GM12878 (cell line): ENCODE measurements at regions of chr14 and their contacts with region 1.

Region 1: DNA sequence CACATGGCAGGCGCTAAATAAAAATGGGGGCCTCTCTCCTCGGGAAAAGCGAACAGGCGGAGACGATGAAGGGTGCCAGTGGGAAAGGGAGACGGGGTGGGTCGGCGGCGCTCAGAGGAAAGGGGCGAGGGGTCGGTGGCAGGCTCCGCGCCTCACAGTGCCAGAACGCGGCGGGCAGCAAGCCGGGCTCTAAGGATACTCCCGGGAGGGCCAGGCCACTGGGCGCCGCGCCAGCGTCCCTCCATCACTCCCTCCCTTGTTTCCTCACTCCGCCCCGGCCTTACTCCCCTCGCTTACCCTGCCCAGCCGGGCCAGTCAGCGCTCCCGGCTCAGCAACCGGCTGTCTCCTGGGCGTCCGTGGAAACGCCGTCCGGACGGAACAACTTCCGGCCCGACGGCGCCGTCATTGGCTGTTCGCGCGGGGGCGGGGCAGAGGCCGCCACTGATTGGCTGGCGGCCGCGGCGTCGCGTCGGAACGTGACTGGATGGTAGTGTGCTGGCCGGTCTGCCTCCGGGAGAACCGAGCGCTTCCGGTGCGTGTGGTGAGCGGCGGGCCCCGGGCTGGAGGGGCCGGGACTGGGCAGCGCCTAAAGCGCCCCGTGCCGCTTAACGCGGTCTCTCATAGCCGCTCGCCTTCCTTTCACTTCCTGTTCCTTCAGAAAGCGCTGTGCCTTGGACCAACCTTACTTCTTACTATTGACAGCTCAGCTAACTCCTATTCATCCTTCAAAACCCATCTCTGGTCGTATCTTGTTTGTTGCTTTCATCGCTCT is 53.0 kb downstream of the SLC25A47 start:
- DNase-seq: peak; percentile 74
- ATAC-seq: peak; percentile 85
- H3K4me3 ChIP-seq: peak within 1 kb of the TSS; percentile 86
- H3K27ac ChIP-seq: peak within 1 kb of the TSS; percentile 98
- H3K4me1 ChIP-seq: peaks cover 29% of the 10 kb centered on the region
- H3K27me3 ChIP-seq: no peaks in the 10 kb centered on the region
- CTCF ChIP-seq: no peak
- EP300 ChIP-seq: no peak
- POLR2A ChIP-seq: peak; percentile 91
- RAD21 ChIP-seq: no peak

Region 2: GRCh38 chr14:100239840-100240724 is 136.1 kb before region 1 on chr14:
- CTCF ChIA-PET with region 1: interaction called, 11 read pairs
- POLR2A ChIA-PET with region 1: interaction called, 3 read pairs
- RAD21 ChIA-PET with region 1: interaction called, 4 read pairs
- SMC1A ChIA-PET with region 1: interaction called, 5 read pairs
- in situ Hi-C with region 1: no loop called
- intact Hi-C with region 1: loop called (anchors 2 kb)
- DNase-seq: no peak
- ATAC-seq: peak; percentile 52
- H3K4me3 ChIP-seq: peak overlapping the region; percentile 95
- H3K27ac ChIP-seq: peak overlapping the region; percentile 74
- H3K4me1 ChIP-seq: no peaks in the 10 kb centered on the region
- H3K27me3 ChIP-seq: no peaks in the 10 kb centered on the region
- CTCF ChIP-seq: peak; percentile 58 to 71 (median 71); a peak in 5 of 6 replicates
- EP300 ChIP-seq: no peak
- POLR2A ChIP-seq: peak; percentile 60; the same call in 1 of the 2 replicates
- RAD21 ChIP-seq: peak; percentile 29; the same call in 1 of the 2 replicates

Region 3: DNA sequence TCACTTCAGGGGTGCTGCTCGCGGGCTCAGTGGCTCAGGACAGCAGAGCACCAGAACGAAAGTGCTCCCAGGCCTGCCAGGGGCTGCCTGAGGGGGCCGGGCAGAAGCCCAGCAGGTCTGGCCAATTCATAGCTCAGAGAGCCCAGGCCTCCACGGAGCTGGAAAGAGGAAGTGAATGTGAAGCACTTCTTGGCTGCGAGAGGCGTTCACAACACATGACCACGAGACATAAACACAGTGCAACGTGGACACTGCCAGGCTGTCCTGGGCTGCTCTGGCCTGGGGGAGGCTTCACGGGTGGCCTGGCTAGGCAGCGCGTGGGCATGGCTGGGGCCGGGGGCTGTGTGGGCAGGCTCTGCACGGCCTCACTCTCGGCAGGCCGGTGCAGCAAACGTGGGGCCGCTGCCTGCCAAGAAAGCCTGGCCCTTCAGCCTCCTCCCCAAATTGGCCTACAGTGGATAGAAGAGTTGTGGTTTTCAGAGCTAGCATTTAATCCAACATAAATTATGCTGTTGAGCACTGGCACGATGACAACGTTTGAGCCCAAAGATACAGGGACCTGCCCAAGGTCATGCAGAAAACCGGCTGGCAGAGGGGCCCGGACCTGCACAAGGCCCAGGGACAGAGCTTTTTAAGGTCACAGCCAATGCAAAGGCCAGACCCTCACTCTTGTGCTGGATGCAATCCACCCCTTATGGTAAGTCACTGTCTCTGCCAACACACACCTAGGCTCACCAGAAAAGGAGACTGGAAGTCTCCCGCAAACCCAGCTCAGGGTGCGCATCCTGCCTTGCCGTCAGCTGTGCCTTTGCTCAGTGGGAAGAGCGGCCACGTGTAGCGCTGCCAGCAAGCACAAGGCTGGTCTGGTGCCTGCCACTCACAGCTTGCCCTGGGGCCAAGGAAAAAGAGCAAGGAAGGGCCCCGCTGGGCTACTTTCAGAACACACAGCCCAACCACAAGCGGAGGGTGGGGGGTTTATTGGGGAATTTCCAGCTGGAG is 78.5 kb before region 1 on chr14:
- CTCF ChIA-PET with region 1: interaction called, 26 read pairs
- POLR2A ChIA-PET with region 1: interaction called, 9 read pairs
- RAD21 ChIA-PET with region 1: interaction called, 25 read pairs
- SMC1A ChIA-PET with region 1: interaction called, 25 read pairs
- in situ Hi-C with region 1: loop called (anchors 5 kb)
- intact Hi-C with region 1: no loop called
- DNase-seq: peak; percentile 35
- ATAC-seq: peak; percentile 96
- H3K4me3 ChIP-seq: no peak overlapping the region
- H3K27ac ChIP-seq: no peak overlapping the region
- H3K4me1 ChIP-seq: peaks cover 16% of the 10 kb centered on the region
- H3K27me3 ChIP-seq: no peaks in the 10 kb centered on the region
- CTCF ChIP-seq: no peak
- EP300 ChIP-seq: no peak
- POLR2A ChIP-seq: 0 out of 2 replicates have a peak, but pooled peaks have one; percentile 19
- RAD21 ChIP-seq: no peak

Region 4: GRCh38 chr14:100341301-100342031 is 34.7 kb before region 1 on chr14:
- CTCF ChIA-PET with region 1: interaction called, 7 read pairs
- POLR2A ChIA-PET with region 1: interaction called, 14 read pairs
- RAD21 ChIA-PET with region 1: interaction called, 10 read pairs
- SMC1A ChIA-PET with region 1: interaction called, 24 read pairs
- in situ Hi-C with region 1: no loop called
- intact Hi-C with region 1: loop called (anchors 5 kb)
- DNase-seq: peak; percentile 44
- ATAC-seq: peak; percentile 81
- H3K4me3 ChIP-seq: no peak overlapping the region
- H3K27ac ChIP-seq: peak overlapping the region; percentile 75
- H3K4me1 ChIP-seq: peaks cover 23% of the 10 kb centered on the region
- H3K27me3 ChIP-seq: no peaks in the 10 kb centered on the region
- CTCF ChIP-seq: no peak
- EP300 ChIP-seq: peak; percentile 17 to 19; a peak in 1 of 4 replicates
- POLR2A ChIP-seq: no peak
- RAD21 ChIP-seq: no peak

Region 5: DNA sequence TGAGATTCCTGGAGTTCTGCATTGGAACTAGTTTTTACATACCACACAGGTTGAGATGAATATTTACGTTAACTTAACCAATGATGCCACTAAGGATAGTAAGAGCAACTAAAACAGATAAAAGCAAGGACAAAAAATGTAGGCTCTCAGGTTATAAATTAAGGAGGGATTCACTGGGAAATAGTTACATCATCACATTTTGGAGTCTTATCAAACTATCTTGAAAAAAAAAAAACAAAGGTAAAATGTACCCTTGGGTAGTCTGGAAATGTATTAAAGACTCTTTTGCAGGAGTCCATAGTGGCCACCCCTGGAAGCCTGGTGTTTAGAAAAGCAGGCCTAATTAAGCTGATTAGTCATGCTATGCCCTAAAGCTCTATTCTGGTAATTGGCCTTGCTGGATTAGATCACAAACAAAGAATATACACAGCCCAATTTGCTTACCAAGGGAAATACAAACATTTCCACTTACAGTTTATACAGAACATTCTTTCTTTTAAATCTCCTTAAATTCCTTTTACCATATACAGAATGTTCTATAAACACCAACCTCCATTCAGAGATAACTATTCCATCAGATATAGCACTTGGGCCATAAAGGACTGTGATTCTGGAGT is 13.7 kb before region 1 on chr14:
- CTCF ChIA-PET with region 1: interaction called, 8 read pairs
- POLR2A ChIA-PET with region 1: interaction called, 6 read pairs
- RAD21 ChIA-PET with region 1: interaction called, 4 read pairs
- SMC1A ChIA-PET with region 1: interaction called, 15 read pairs
- in situ Hi-C with region 1: no loop called
- intact Hi-C with region 1: no loop called
- DNase-seq: no peak
- ATAC-seq: no peak
- H3K4me3 ChIP-seq: no peak overlapping the region
- H3K27ac ChIP-seq: no peak overlapping the region
- H3K4me1 ChIP-seq: no peaks in the 10 kb centered on the region; the same call in 1 of the 2 replicates
- H3K27me3 ChIP-seq: no peaks in the 10 kb centered on the region
- CTCF ChIP-seq: no peak
- EP300 ChIP-seq: no peak
- POLR2A ChIP-seq: no peak
- RAD21 ChIP-seq: no peak